GM12878 (cell line): ENCODE measurements at regions of chr12 and their contacts with region 1.

Region 1: DNA sequence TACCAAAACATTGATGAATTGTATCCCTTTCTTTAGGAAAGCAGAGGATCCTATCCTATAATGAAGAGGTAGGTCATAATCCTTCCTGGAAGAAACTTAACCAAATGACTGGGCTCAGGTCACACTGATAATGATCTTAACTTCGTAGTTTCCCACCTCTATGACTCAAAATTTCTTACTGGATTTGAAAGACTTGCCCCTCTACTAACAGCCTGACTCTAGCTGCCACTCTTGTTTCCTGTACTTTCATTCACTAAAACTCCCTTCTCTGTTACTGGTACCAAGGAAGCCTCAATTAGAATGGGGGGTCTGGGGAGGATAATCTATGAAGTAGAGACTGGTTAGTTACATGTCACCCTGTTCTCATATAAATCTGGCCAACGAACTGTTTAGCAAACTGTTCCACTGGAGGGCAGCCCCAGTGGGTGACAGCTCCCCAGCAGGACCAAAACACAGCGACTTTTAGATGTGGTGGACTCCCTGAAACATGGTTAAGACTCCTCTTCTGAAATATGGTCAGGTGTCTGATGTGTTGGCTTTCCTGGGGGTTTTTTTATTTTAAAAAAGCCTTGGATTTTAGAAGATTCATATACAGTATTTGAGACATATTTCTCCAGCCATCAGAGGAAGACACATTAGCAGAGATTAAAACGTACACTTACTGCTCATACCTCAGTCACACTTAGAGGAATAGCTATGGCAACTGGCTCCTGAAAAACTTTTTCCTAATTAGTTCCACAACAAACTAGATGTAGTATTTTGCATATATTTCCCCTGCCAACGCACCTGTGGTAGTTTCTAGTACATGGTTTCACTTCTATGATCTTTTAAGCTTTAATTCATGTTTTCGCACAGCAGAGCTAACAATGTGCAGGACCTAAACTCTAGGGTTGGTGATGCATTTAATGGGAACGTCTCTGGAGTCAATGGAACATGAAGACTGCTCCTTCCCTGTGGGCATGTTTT is 72.3 kb downstream of the ACADS start:
- DNase-seq: peak; percentile 51
- ATAC-seq: peak; percentile 66
- H3K4me3 ChIP-seq: peak overlapping the region; percentile 35
- H3K27ac ChIP-seq: peak overlapping the region; percentile 76
- H3K4me1 ChIP-seq: peaks cover 46% of the 10 kb centered on the region
- H3K27me3 ChIP-seq: no peaks in the 10 kb centered on the region
- CTCF ChIP-seq: 0 out of 6 replicates have a peak, but pooled peaks of 2 of the 3 experiments have one; percentile 1 to 5
- EP300 ChIP-seq: no peak
- POLR2A ChIP-seq: no peak
- RAD21 ChIP-seq: peak; percentile 32; the same call in 1 of the 2 replicates

Region 2: DNA sequence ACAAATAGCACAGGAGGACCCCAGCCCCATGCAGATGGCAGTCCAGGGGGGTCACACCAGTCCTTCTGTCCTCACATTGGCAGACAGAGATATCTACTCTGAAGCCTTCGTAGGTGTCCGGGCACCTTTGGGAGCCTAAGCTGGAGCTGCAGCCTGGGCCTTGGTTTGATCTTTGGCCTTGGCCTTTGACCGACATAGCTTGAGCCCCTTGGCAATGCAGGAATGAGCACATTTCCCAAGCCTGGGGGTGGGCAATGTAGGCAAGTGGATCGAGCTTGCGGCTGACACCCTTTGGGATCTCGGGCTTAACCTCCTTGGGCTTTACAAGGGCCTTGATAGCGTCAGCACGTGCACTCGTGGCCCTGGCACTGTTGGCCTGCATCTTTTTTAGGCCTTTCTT is 275.4 kb before region 1 on chr12:
- CTCF ChIA-PET with region 1: no interaction called
- POLR2A ChIA-PET with region 1: no interaction called
- RAD21 ChIA-PET with region 1: no interaction called
- SMC1A ChIA-PET with region 1: no interaction called
- in situ Hi-C with region 1: no loop called
- intact Hi-C with region 1: no loop called
- DNase-seq: no peak
- ATAC-seq: no peak
- H3K4me3 ChIP-seq: no peak overlapping the region
- H3K27ac ChIP-seq: no peak overlapping the region
- H3K4me1 ChIP-seq: no peaks in the 10 kb centered on the region
- H3K27me3 ChIP-seq: no peaks in the 10 kb centered on the region
- CTCF ChIP-seq: no peak
- EP300 ChIP-seq: no peak
- POLR2A ChIP-seq: no peak
- RAD21 ChIP-seq: no peak

Region 3: DNA sequence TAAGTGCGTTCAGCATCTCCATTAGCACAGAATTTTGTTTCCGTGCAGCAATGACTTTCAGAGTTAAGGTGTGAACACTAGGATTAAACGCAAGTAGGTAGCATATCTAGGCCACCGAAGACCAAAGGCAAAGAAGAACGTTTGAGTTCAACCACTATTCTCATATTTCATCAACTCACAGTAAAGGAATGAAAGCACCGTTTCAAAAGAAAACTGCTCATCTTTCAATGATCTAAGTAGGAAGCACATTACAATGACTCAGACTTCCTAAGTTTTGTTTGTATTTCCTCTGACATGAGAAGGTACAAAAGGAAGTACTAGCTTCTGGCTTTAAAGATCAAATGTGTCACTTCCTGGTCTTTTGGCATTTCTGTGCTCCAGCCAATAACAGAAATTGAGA is 14.8 kb before region 1 on chr12:
- CTCF ChIA-PET with region 1: interaction called, 5 read pairs
- POLR2A ChIA-PET with region 1: interaction called, 5 read pairs
- RAD21 ChIA-PET with region 1: no interaction called
- SMC1A ChIA-PET with region 1: interaction called, 29 read pairs
- in situ Hi-C with region 1: no loop called
- intact Hi-C with region 1: no loop called
- DNase-seq: no peak
- ATAC-seq: no peak
- H3K4me3 ChIP-seq: no peak overlapping the region
- H3K27ac ChIP-seq: no peak overlapping the region
- H3K4me1 ChIP-seq: no peaks in the 10 kb centered on the region
- H3K27me3 ChIP-seq: no peaks in the 10 kb centered on the region
- CTCF ChIP-seq: no peak
- EP300 ChIP-seq: no peak
- POLR2A ChIP-seq: no peak
- RAD21 ChIP-seq: no peak

Region 4: GRCh38 chr12:120818416-120818815 is 20.5 kb after region 1 on chr12:
- CTCF ChIA-PET with region 1: interaction called, 8 read pairs
- POLR2A ChIA-PET with region 1: interaction called, 3 read pairs
- RAD21 ChIA-PET with region 1: interaction called, 17 read pairs
- SMC1A ChIA-PET with region 1: interaction called, 164 read pairs
- in situ Hi-C with region 1: no loop called
- intact Hi-C with region 1: no loop called
- DNase-seq: no peak
- ATAC-seq: no peak
- H3K4me3 ChIP-seq: no peak overlapping the region
- H3K27ac ChIP-seq: no peak overlapping the region
- H3K4me1 ChIP-seq: peaks cover 24% of the 10 kb centered on the region
- H3K27me3 ChIP-seq: no peaks in the 10 kb centered on the region
- CTCF ChIP-seq: no peak
- EP300 ChIP-seq: no peak
- POLR2A ChIP-seq: no peak
- RAD21 ChIP-seq: no peak

Region 5: DNA sequence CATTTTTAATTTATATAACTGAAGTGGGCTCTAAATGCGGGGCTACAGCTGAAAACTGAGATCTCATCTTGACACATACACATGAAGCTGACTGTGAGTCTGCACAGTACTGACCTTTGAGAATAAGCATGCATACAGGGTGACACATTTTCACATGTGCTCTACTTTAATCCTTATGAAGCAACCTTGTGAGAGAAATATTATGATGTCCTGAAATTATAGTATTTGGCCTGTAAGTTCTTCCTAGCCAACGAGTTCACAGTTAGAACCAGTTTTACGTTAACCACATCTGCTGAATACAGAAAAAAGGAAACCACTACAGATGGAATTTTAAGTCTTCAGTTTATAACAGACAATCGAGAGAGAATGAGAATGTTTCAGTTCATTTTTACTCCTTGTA is 35.9 kb after region 1 on chr12:
- CTCF ChIA-PET with region 1: interaction called, 35 read pairs
- POLR2A ChIA-PET with region 1: interaction called, 15 read pairs
- RAD21 ChIA-PET with region 1: interaction called, 41 read pairs
- SMC1A ChIA-PET with region 1: interaction called, 164 read pairs
- in situ Hi-C with region 1: no loop called
- intact Hi-C with region 1: no loop called
- DNase-seq: no peak
- ATAC-seq: peak; percentile 67
- H3K4me3 ChIP-seq: peak overlapping the region; percentile 66
- H3K27ac ChIP-seq: peak overlapping the region; percentile 96
- H3K4me1 ChIP-seq: peaks cover 64% of the 10 kb centered on the region
- H3K27me3 ChIP-seq: no peaks in the 10 kb centered on the region
- CTCF ChIP-seq: no peak
- EP300 ChIP-seq: no peak
- POLR2A ChIP-seq: no peak
- RAD21 ChIP-seq: no peak

Region 6: GRCh38 chr12:120849765-120850164 is 51.8 kb after region 1 on chr12:
- CTCF ChIA-PET with region 1: interaction called, 27 read pairs
- POLR2A ChIA-PET with region 1: interaction called, 6 read pairs
- RAD21 ChIA-PET with region 1: interaction called, 23 read pairs
- SMC1A ChIA-PET with region 1: interaction called, 108 read pairs
- in situ Hi-C with region 1: no loop called
- intact Hi-C with region 1: loop called (anchors 5 kb)
- DNase-seq: no peak
- ATAC-seq: no peak
- H3K4me3 ChIP-seq: no peak overlapping the region
- H3K27ac ChIP-seq: peak overlapping the region; percentile 54
- H3K4me1 ChIP-seq: peaks cover 68% of the 10 kb centered on the region
- H3K27me3 ChIP-seq: no peaks in the 10 kb centered on the region
- CTCF ChIP-seq: no peak
- EP300 ChIP-seq: no peak
- POLR2A ChIP-seq: no peak
- RAD21 ChIP-seq: no peak

Region 7: DNA sequence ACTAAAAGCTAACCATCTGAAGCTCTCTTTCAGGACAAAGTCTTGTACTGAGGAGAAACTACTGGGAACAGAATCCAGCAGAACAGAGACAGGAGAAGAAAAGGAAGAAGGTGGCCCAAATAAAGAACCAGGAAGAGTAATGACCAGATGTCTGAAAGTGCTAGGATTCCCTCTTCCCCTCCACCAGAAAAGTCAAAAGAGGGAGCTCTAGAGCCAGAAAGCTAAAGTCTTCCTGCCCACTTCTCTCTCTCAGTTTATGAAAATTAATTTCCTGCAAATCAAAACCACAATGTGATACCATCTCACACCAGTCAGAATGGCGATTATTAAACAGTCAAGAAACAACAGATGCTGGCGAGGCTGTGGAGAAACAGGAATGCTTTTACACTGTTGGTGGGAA is 59.0 kb after region 1 on chr12:
- CTCF ChIA-PET with region 1: interaction called, 27 read pairs
- POLR2A ChIA-PET with region 1: interaction called, 6 read pairs
- RAD21 ChIA-PET with region 1: interaction called, 23 read pairs
- SMC1A ChIA-PET with region 1: interaction called, 108 read pairs
- in situ Hi-C with region 1: no loop called
- intact Hi-C with region 1: no loop called
- DNase-seq: no peak
- ATAC-seq: no peak; the same call in 2 of the 3 replicates
- H3K4me3 ChIP-seq: no peak overlapping the region
- H3K27ac ChIP-seq: peak overlapping the region; percentile 27; the same call in 1 of the 2 replicates
- H3K4me1 ChIP-seq: peaks cover 32% of the 10 kb centered on the region
- H3K27me3 ChIP-seq: no peaks in the 10 kb centered on the region
- CTCF ChIP-seq: peak; percentile 30 to 52 (median 34); a peak in 4 of 6 replicates
- EP300 ChIP-seq: no peak
- POLR2A ChIP-seq: no peak
- RAD21 ChIP-seq: peak; percentile 63

Region 8: DNA sequence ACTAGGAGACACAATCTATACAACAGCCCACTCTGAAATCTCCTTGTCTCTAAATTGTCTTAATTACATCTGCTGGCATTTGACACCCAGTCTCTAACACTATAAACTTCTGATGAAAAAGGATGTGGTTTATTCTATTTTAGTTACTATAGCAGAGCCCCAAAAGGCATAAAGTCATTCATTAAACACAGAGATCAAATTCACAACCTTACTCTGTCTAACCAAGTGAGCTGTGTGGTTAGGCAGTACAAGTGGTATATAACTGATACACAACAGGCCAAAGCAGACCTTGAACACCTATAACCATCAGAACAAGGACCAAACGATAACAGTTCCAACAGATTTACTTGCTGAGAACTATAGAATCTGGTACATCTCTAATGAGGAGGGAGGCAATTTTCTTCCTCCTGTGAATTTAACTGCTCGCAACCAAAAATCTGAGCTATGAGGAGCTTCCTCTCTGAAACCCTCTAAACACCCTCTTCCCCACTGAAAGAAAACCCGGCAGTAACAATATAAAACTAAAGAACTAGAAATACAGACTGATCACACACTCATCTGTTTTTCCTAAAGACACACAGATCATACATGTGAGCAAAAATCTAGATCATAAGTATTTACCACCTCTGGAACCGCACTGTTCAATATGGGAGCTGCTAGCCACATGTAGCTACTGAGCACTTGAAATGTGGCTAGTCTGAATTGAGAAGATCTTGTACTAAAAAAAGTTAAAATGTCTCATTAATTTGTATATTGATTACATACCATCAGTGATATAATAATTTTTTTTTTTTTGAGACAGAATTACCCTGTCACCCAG is 88.4 kb after region 1 on chr12:
- CTCF ChIA-PET with region 1: interaction called, 3 read pairs
- POLR2A ChIA-PET with region 1: interaction called, 5 read pairs
- RAD21 ChIA-PET with region 1: interaction called, 14 read pairs
- SMC1A ChIA-PET with region 1: interaction called, 26 read pairs
- in situ Hi-C with region 1: no loop called
- intact Hi-C with region 1: no loop called
- DNase-seq: peak; percentile 68
- ATAC-seq: peak; percentile 90
- H3K4me3 ChIP-seq: no peak overlapping the region
- H3K27ac ChIP-seq: peak overlapping the region; percentile 84
- H3K4me1 ChIP-seq: peaks cover 20% of the 10 kb centered on the region; the same call in 1 of the 2 replicates
- H3K27me3 ChIP-seq: no peaks in the 10 kb centered on the region
- CTCF ChIP-seq: no peak
- EP300 ChIP-seq: 0 out of 4 replicates have a peak, but pooled peaks of 1 of the 2 experiments have one; percentile 13
- POLR2A ChIP-seq: no peak
- RAD21 ChIP-seq: no peak